CD4-positive, alpha-beta memory T cell (primary cell): ENCODE measurements at regions of chr22 and their contacts with region 1.

Region 1: GRCh38 chr22:37260901-37261336 is 16.9 kb upstream of the RAC2 start:
- DNase-seq: peak; percentile 62 to 70 (median 65)
- H3K4me3 ChIP-seq: no peak overlapping the region
- H3K4me3 Mint-ChIP-seq: peak overlapping the region in 4 of 8 donors; percentile 2 to 40 (median 22)
- H3K27ac ChIP-seq: no peak overlapping the region
- H3K27ac Mint-ChIP-seq: peak overlapping the region; percentile 15 to 73 (median 52)
- H3K4me1 ChIP-seq: peaks cover 19% of the 10 kb centered on the region
- H3K4me1 Mint-ChIP-seq: peaks cover 11 to 18% (median 14%) of the 10 kb centered on the region in 4 donors
- H3K27me3 ChIP-seq: no peaks in the 10 kb centered on the region
- H3K27me3 Mint-ChIP-seq: peaks cover 0 to 1% of the 10 kb centered on the region in 2 donors

Region 2: DNA sequence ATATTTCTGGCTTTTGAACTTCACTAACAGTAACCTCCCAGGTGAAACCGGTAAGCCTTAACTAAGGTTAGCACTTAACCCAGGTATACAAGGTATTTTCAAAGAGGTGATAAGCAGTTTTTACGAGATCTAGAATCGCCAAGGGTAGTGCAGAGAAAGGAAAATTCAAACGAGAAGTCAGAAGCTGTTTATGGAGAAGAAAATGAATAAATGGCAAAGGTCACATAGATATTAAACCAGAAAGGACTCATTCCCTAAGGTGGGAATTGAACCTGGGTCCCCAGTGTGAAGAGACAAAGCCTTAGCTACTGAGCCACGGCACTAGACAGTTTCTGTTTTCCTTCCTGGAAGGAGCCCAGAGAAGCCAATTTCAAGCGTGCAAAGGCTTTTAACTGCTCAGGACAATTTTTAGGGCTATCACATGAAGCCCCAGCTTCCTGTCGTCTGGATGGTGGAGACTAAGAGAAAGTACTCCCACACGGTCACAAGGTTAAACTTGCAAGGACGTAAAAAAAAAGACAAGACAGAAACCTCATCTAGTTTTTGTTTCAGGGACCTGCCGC is 67.2 kb before region 1 on chr22:
- CTCF ChIA-PET with region 1: interaction called, 86 read pairs
- POLR2A ChIA-PET with region 1: interaction called, 21 read pairs
- intact Hi-C with region 1: no loop called
- DNase-seq: peak; percentile 41 to 63 (median 45)
- H3K4me3 ChIP-seq: no peak overlapping the region
- H3K4me3 Mint-ChIP-seq: peak overlapping the region; percentile 49 to 82 (median 60)
- H3K27ac ChIP-seq: peak overlapping the region; percentile 17
- H3K27ac Mint-ChIP-seq: peak overlapping the region; percentile 68 to 95 (median 90)
- H3K4me1 ChIP-seq: peaks cover 51% of the 10 kb centered on the region
- H3K4me1 Mint-ChIP-seq: peaks cover 18 to 55% (median 33%) of the 10 kb centered on the region in 4 donors
- H3K27me3 ChIP-seq: no peaks in the 10 kb centered on the region
- H3K27me3 Mint-ChIP-seq: no peaks in the 10 kb centered on the region

Region 3: GRCh38 chr22:37218771-37219411 is 42.0 kb before region 1 on chr22:
- CTCF ChIA-PET with region 1: interaction called, 58 read pairs
- POLR2A ChIA-PET with region 1: interaction called, 17 read pairs
- intact Hi-C with region 1: loop called (anchors 2 kb)
- DNase-seq: peak; percentile 86 to 96 (median 91)
- H3K4me3 ChIP-seq: peak overlapping the region; percentile 15 to 51
- H3K4me3 Mint-ChIP-seq: peak overlapping the region; percentile 67 to 90 (median 84)
- H3K27ac ChIP-seq: peak overlapping the region; percentile 58
- H3K27ac Mint-ChIP-seq: peak overlapping the region; percentile 87 to 98 (median 95)
- H3K4me1 ChIP-seq: peaks cover 73% of the 10 kb centered on the region
- H3K4me1 Mint-ChIP-seq: peaks cover 58 to 79% (median 64%) of the 10 kb centered on the region in 4 donors
- H3K27me3 ChIP-seq: no peaks in the 10 kb centered on the region
- H3K27me3 Mint-ChIP-seq: no peaks in the 10 kb centered on the region

Region 4: DNA sequence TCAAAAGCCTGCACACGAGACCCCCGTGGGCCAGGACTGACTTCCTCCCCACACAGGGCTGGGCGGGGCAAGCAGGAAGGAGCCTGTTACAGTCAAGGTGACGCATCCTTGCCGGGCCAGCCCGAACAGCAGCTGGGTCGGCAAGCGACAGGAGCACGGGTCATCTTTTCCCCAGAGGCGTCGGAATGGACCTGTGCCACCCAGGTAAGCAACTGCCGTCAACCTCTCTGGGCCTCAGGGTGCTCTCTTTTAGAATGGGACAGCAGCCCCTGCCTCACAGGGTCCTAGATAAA is 21.4 kb after region 1 on chr22 and contains the start of gene CYTH4:
- CTCF ChIA-PET with region 1: interaction called, 23 read pairs
- POLR2A ChIA-PET with region 1: interaction called, 23 read pairs
- intact Hi-C with region 1: no loop called
- DNase-seq: peak; percentile 52 to 87 (median 65)
- H3K4me3 ChIP-seq: peak within 1 kb of the TSS; percentile 98 to 99
- H3K4me3 Mint-ChIP-seq: peak within 1 kb of the TSS; percentile 89 to 100 (median 94)
- H3K27ac ChIP-seq: peak within 1 kb of the TSS; percentile 81
- H3K27ac Mint-ChIP-seq: peak within 1 kb of the TSS; percentile 83 to 99 (median 96)
- H3K4me1 ChIP-seq: peaks cover 46% of the 10 kb centered on the region
- H3K4me1 Mint-ChIP-seq: peaks cover 33 to 56% (median 44%) of the 10 kb centered on the region in 4 donors
- H3K27me3 ChIP-seq: no peaks in the 10 kb centered on the region
- H3K27me3 Mint-ChIP-seq: no peaks in the 10 kb centered on the region
- total RNA-seq, gene CYTH4: 169 to 177 TPM

Region 5: GRCh38 chr22:37428649-37429586 is 168.0 kb after region 1 on chr22:
- CTCF ChIA-PET with region 1: interaction called, 41 read pairs
- POLR2A ChIA-PET with region 1: interaction called, 3 read pairs
- intact Hi-C with region 1: no loop called
- DNase-seq: peak in 4 of 5 donors; percentile 45 to 58 (median 55)
- H3K4me3 ChIP-seq: no peak overlapping the region
- H3K4me3 Mint-ChIP-seq: peak overlapping the region in 6 of 8 donors; percentile 9 to 67 (median 32)
- H3K27ac ChIP-seq: no peak overlapping the region
- H3K27ac Mint-ChIP-seq: peak overlapping the region in 1 of 7 donors; percentile 11
- H3K4me1 ChIP-seq: peaks cover 16% of the 10 kb centered on the region
- H3K4me1 Mint-ChIP-seq: peaks cover 3 to 22% (median 13%) of the 10 kb centered on the region in 4 donors
- H3K27me3 ChIP-seq: peaks cover 28% of the 10 kb centered on the region
- H3K27me3 Mint-ChIP-seq: peaks cover 43 to 56% of the 10 kb centered on the region in 2 donors